Common myeloid progenitor, CD34-positive (primary cell): ENCODE measurements at regions of chr5 and their contacts with region 1.

Region 1: GRCh38 chr5:57137401-57137800 is 36.5 kb upstream of the GPBP1 start:
- DNase-seq: no peak
- H3K4me3 ChIP-seq: no peak overlapping the region
- H3K27ac ChIP-seq: no peak overlapping the region
- H3K4me1 ChIP-seq: no peaks in the 10 kb centered on the region
- H3K27me3 ChIP-seq: no peaks in the 10 kb centered on the region

Region 2: DNA sequence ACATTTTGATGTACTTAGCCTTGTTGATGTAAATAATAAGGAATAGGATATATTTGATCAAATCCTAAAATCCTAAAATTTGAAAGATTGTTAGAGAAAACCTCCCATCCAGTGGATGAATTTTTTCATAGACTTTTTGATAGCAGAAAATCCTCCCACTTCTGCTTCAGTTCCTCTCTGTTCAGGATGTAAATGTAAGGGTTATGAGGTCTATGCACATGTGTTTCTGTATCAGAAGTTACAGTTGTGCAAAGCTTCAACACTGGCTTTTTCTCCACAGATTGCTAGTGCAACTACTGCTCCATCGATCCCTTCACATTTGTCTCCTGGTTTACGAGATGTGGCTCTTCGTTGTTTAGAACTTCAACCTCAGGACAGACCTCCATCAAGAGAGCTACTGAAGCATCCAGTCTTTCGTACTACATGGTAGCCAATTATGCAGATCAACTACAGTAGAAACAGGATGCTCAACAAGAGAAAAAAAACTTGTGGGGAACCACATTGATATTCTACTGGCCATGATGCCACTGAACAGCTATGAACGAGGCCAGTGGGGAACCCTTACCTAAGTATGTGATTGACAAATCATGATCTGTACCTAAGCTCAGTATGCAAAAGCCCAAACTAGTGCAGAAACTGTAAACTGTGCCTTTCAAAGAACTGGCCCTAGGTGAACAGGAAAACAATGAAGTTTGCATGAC is 244.0 kb before region 1 on chr5:
- CTCF ChIA-PET with region 1: interaction called, 17 read pairs
- POLR2A ChIA-PET with region 1: no interaction called
- DNase-seq: no peak
- H3K4me3 ChIP-seq: no peak overlapping the region
- H3K27ac ChIP-seq: no peak overlapping the region
- H3K4me1 ChIP-seq: no peaks in the 10 kb centered on the region
- H3K27me3 ChIP-seq: no peaks in the 10 kb centered on the region

Region 3: DNA sequence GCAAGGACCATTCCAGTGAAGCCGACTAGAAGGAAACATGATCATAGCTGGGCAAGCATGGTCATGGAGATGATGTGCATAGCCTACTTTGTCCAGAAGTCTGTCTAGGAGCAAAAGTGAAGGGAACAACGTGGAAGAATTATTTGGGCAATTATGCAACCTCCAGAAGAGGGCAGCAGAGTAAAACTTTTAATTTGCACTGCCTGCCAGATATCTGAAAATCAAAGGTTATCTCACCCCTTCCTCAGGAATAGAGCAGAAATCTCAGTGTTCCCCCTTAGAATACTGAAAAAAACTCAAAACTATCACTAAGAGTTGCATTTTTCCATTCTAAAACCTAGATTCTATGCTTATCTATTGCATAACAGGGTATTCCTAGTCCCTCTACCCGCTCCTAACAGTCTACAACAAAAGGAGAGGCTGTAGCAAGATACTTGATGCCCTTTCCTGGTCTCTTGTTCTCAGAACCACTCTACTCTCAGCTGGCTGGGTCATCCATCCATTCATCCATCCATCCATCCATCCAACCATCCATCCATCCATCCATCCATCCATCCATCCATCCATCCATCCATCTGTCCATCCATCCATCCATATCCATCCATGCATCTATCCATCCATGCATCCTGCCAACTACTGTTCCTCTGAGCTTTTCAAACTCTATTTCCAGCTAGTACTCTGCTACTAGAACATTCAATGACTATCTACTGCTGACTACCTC is 236.4 kb before region 1 on chr5:
- CTCF ChIA-PET with region 1: interaction called, 46 read pairs
- POLR2A ChIA-PET with region 1: no interaction called
- DNase-seq: peak; percentile 58 to 70 (median 60)
- H3K4me3 ChIP-seq: no peak overlapping the region
- H3K27ac ChIP-seq: no peak overlapping the region
- H3K4me1 ChIP-seq: peaks cover 0 to 5% (median 2%) of the 10 kb centered on the region in 4 experiments
- H3K27me3 ChIP-seq: no peaks in the 10 kb centered on the region

Region 4: GRCh38 chr5:56950626-56951125 is 186.7 kb before region 1 on chr5:
- CTCF ChIA-PET with region 1: interaction called, 14 read pairs
- POLR2A ChIA-PET with region 1: no interaction called
- DNase-seq: peak; percentile 45 to 68 (median 57)
- H3K4me3 ChIP-seq: peak overlapping the region; percentile 66 to 93 (median 86)
- H3K27ac ChIP-seq: peak overlapping the region in 1 of 2 experiments; percentile 68
- H3K4me1 ChIP-seq: peaks cover 4 to 21% (median 13%) of the 10 kb centered on the region in 4 experiments
- H3K27me3 ChIP-seq: peaks cover 0 to 2% (median 0%) of the 10 kb centered on the region in 5 experiments

Region 5: DNA sequence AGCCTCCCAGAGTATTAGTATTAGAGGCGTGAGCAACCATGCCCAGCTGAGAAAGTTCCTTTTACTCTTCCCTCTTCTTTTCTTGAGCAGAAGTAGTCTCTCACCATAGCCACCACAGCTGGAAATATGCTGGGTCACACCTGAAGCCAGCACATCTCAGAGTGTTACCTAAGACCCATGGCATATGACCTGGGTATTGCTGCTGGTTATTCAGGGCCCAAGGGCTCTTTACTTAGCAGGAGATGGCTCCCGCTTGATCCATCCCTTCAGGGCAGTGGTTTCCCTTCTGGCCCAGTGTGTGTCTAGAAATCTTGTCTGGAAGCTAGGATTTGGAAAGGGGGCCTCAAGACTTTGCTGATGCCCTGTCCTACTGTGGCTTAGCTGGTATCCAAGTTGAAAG is 13.3 kb after region 1 on chr5:
- CTCF ChIA-PET with region 1: interaction called, 10 read pairs
- POLR2A ChIA-PET with region 1: no interaction called
- DNase-seq: no peak
- H3K4me3 ChIP-seq: no peak overlapping the region
- H3K27ac ChIP-seq: no peak overlapping the region
- H3K4me1 ChIP-seq: no peaks in the 10 kb centered on the region
- H3K27me3 ChIP-seq: no peaks in the 10 kb centered on the region

Region 6: GRCh38 chr5:57221049-57221568 is 83.7 kb after region 1 on chr5:
- CTCF ChIA-PET with region 1: interaction called, 17 read pairs
- POLR2A ChIA-PET with region 1: no interaction called
- DNase-seq: peak; percentile 76 to 90 (median 82)
- H3K4me3 ChIP-seq: no peak overlapping the region
- H3K27ac ChIP-seq: no peak overlapping the region
- H3K4me1 ChIP-seq: no peaks in the 10 kb centered on the region
- H3K27me3 ChIP-seq: no peaks in the 10 kb centered on the region